BJ (cell line): ENCODE measurements at regions of chr9 and their contacts with region 1.

Region 1: DNA sequence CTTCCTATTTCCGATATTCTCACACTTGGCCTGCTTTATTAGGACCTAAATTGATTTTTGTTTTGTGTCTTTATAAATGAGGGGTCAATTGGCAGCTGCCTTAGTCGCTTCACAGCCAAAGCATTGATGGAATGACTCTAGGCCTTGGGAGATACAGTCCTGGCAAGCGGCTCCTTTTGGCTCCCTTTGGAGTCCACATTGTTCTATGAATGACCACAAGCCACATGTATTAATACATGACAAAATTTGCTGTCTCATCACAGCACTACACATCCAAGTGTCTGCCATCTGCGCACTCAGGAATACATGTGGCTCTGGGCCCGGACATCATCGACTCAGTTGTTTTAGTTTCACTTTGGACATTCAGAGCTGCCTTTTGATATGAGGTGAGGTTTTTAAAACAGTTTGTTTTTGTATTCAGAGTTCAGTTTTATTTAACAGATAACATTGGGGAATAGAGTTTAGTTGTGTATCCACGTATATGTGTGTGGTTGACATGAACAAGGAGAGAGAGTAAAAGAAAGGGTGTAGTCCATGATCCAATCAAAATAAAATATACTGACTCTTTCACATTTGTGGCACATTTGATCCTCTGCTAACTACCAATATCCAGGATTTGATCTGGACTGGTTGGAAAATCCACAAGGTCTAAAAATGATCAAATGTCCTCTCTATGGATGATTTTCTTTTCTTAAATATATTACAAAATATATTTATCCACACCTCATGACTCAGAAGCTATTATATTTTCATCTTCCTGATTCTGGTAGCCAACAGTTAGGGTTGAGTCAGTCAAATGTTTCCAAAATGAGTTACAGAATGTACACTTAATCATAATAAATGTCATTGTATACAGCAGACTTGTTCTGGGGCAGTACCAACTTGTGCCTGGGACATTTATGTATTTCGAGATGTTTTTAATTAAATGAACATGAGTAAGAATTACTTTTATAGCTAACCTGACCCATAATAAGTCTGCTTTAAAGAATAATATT is 114.0 kb upstream of the MTAP start:
- DNase-seq: no peak
- H3K4me3 ChIP-seq: no peak overlapping the region
- H3K27me3 ChIP-seq: no peaks in the 10 kb centered on the region
- CTCF ChIP-seq: no peak

Region 2: DNA sequence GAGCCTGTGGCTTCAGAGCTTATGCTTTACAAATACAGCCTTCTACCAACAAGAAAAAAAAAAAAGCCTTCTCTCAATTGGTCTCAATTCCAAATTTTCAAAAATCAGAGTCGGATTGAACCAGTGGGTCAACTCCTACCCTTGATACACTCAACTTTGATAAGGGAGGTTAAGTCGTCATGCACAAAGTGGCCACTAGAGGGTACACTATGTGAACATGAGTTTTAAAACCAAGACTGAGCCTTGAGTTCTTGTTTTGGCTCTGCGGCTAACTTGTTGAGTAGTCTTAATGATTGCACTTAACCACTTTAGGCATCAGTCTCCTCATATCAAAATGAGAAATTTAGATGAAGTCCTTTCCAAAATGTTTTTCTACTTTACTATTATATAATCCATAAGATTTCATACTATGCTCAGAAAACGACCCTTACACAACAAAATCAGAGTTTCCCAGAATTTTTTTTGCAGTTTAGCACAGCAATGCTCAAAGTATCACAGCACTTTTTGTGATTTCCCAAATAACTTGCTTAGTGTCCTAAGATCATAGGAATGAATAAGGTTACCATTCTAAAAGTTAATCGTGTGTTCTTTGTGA is 21.2 kb after region 1 on chr9:
- CTCF ChIA-PET with region 1: interaction called, 19 read pairs
- POLR2A ChIA-PET with region 1: no interaction called
- DNase-seq: no peak
- H3K4me3 ChIP-seq: no peak overlapping the region
- H3K27me3 ChIP-seq: no peaks in the 10 kb centered on the region
- CTCF ChIP-seq: peak; percentile 69